Esophagus squamous epithelium (tissue), 5 donors: ENCODE measurements at regions of chr3 and their contacts with region 1.

Region 1: DNA sequence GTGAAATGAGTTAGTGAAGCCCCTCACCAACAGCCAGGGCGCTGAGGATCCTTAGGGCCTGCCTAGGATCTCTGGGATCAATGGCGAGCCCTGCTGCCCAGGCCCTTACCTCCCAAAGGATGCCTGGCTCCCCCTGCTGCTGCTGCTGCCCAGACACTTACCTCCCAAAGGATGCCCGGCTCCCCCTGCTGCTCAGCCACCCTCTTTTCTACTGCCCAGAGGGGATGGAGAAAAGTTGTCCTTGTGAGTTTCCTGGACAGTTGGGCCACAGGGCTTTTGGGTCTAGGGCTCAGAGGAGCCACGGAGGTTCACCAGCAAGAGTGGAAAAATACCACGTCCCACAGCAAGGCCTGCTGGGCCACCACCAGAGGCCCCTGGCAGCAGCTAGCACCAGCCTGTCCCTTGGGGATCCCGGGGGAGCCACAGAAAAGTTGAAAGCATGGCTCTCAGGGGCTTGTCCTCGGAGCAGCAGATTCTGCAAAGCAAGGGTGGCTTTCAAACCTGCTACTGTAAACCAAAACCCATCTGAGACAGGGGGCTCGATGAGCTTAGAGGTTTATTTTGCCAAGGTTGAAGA is 59.4 kb downstream of the SLC6A6 start:
- DNase-seq: no peak
- H3K4me3 ChIP-seq: no peak overlapping the region
- H3K27ac ChIP-seq: no peak overlapping the region
- H3K4me1 ChIP-seq: peaks cover 0 to 26% (median 9%) of the 10 kb centered on the region in 3 donors
- H3K27me3 ChIP-seq: no peaks in the 10 kb centered on the region
- CTCF ChIP-seq: peak; percentile 17 to 69 (median 54)
- POLR2A ChIP-seq: no peak

Region 2: GRCh38 chr3:14261229-14261628 is 200.6 kb before region 1 on chr3:
- intact Hi-C with region 1: loop called (anchors 2 kb)
- DNase-seq: no peak
- H3K4me3 ChIP-seq: no peak overlapping the region
- H3K27ac ChIP-seq: no peak overlapping the region
- H3K4me1 ChIP-seq: peaks cover 3 to 28% (median 12%) of the 10 kb centered on the region in 3 donors
- H3K27me3 ChIP-seq: peaks cover 0 to 29% (median 0%) of the 10 kb centered on the region in 4 donors
- CTCF ChIP-seq: peak; percentile 80 to 98 (median 97)
- POLR2A ChIP-seq: no peak

Region 3: GRCh38 chr3:14402304-14402811 is 59.5 kb before region 1 on chr3 and contains the start of gene SLC6A6:
- intact Hi-C with region 1: loop called (anchors 5 kb)
- DNase-seq: peak; percentile 96
- H3K4me3 ChIP-seq: peak within 1 kb of the TSS; percentile 51 to 90 (median 74)
- H3K27ac ChIP-seq: peak within 1 kb of the TSS; percentile 83 to 96 (median 94)
- H3K4me1 ChIP-seq: peaks cover 21 to 63% (median 27%) of the 10 kb centered on the region in 3 donors
- H3K27me3 ChIP-seq: no peaks in the 10 kb centered on the region
- CTCF ChIP-seq: peak; percentile 4 to 81 (median 58)
- POLR2A ChIP-seq: peak in 2 of 4 donors; percentile 68 to 69
- total RNA-seq, gene SLC6A6: 14.4 to 35.7 (median 17.0) TPM